Common myeloid progenitor, CD34-positive (primary cell): ENCODE measurements at regions of chr1 and their contacts with region 1.

Region 1: GRCh38 chr1:1615256-1616044 is at the start of gene MIB2:
- DNase-seq: peak; percentile 94 to 98 (median 97)
- H3K4me3 ChIP-seq: peak within 1 kb of the TSS; percentile 82 to 98 (median 92)
- H3K27ac ChIP-seq: peak within 1 kb of the TSS; percentile 86 to 97
- H3K4me1 ChIP-seq: peaks cover 5 to 42% (median 31%) of the 10 kb centered on the region in 4 experiments
- H3K27me3 ChIP-seq: no peaks in the 10 kb centered on the region

Region 2: GRCh38 chr1:1451696-1452367 is 163.6 kb before region 1 on chr1:
- CTCF ChIA-PET with region 1: no interaction called
- POLR2A ChIA-PET with region 1: no interaction called
- DNase-seq: no peak
- H3K4me3 ChIP-seq: no peak overlapping the region
- H3K27ac ChIP-seq: no peak overlapping the region
- H3K4me1 ChIP-seq: no peaks in the 10 kb centered on the region
- H3K27me3 ChIP-seq: peaks cover 0 to 2% (median 0%) of the 10 kb centered on the region in 5 experiments

Region 3: GRCh38 chr1:1630271-1630964 is 15.0 kb after region 1 on chr1:
- CTCF ChIA-PET with region 1: interaction called, 5 read pairs
- POLR2A ChIA-PET with region 1: interaction called, 20 read pairs
- DNase-seq: peak; percentile 93 to 98 (median 98)
- H3K4me3 ChIP-seq: peak overlapping the region in 3 of 7 experiments; percentile 31 to 40 (median 38)
- H3K27ac ChIP-seq: no peak overlapping the region
- H3K4me1 ChIP-seq: peaks cover 0 to 31% (median 13%) of the 10 kb centered on the region in 4 experiments
- H3K27me3 ChIP-seq: peaks cover 0 to 18% (median 0%) of the 10 kb centered on the region in 5 experiments